PC-3 (cell line): ENCODE measurements at regions of chr2 and their contacts with region 1.

Region 1: GRCh38 chr2:70855667-70856066 is 20.1 kb upstream of the CD207 start:
- DNase-seq: no peak
- ATAC-seq: no peak
- H3K4me3 ChIP-seq: no peak overlapping the region
- H3K27ac ChIP-seq: no peak overlapping the region
- H3K4me1 ChIP-seq: no peaks in the 10 kb centered on the region
- H3K27me3 ChIP-seq: peaks cover 50% of the 10 kb centered on the region
- CTCF ChIP-seq: no peak

Region 2: GRCh38 chr2:70833246-70833645 is 22.4 kb before region 1 on chr2:
- CTCF ChIA-PET with region 1: no interaction called
- POLR2A ChIA-PET with region 1: no interaction called
- intact Hi-C with region 1: loop called (anchors 1 kb)
- DNase-seq: no peak
- ATAC-seq: no peak
- H3K4me3 ChIP-seq: no peak overlapping the region
- H3K27ac ChIP-seq: no peak overlapping the region
- H3K4me1 ChIP-seq: no peaks in the 10 kb centered on the region
- H3K27me3 ChIP-seq: peaks cover 88% of the 10 kb centered on the region
- CTCF ChIP-seq: no peak

Region 3: DNA sequence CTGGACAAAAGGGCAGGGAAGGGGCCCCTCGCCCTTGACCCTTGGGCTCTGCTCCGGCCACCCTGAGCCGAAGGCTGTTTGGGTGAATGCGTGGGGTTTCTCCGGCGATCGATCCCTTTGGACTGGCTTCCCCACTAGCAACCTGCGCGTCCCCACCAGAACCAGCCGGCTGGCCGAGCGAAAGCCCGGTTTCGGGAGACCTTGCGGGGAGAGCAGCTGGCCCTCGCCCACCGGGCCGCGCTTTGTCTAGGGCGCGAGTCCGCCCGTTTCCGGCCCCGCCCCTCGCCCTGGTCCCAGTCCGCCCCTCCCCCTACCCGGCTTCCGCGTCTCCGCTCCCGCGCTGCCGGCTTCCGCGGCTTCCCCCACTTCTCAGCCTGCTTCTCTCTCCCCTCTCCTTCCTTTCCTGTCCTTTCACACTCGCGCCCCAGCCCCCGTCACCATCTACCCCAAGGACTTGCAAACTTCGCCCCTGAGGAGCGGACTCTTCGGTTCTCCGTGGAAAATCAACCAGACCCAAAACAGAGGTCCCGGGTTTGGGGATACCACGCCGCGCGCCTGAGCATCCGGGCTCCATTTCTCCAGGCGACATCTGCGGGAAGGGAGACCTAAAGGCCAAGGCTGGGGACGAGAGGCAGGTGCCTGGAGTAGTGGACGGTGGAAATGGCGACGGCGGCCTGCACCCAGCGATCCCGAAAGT is 32.0 kb after region 1 on chr2:
- CTCF ChIA-PET with region 1: no interaction called
- POLR2A ChIA-PET with region 1: no interaction called
- intact Hi-C with region 1: no loop called
- DNase-seq: no peak
- ATAC-seq: no peak
- H3K4me3 ChIP-seq: no peak overlapping the region
- H3K27ac ChIP-seq: no peak overlapping the region
- H3K4me1 ChIP-seq: no peaks in the 10 kb centered on the region
- H3K27me3 ChIP-seq: peaks cover 44% of the 10 kb centered on the region
- CTCF ChIP-seq: no peak

Region 4: DNA sequence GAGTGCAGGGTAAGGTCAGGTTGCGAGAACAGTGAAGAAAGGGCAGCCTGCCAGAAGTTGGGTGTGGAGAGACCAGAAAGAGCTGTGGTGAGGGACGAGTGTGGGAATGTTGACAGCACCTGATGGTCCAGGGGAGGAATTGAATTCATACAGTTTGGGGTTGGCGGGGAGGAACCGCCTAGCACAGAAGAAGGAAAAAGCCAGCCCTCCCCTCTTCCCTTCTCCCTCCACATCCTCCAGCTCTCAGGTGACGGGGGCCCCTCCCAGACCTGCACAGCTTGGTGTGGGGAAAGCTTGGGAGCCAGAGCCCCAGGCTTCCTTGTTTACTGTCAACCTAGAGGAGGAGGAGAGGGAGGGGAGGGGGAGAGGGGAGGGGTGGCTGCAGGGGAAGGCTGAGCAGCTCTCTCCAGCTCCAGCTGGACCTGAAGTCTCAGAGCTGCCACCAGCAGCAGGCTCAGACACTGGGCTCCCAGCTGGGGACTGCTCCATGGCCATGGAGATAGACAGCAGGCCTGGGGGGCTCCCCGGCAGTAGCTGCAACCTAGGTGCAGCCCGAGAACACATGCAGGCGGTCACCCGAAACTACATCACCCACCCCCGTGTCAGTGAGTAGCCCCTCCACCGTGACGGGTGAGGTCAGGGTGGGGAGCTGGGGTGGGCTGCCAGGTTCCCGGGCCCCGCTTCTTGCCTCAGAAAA is 79.9 kb after region 1 on chr2 and contains the start of gene ATP6V1B1:
- CTCF ChIA-PET with region 1: no interaction called
- POLR2A ChIA-PET with region 1: no interaction called
- intact Hi-C with region 1: no loop called
- DNase-seq: no peak
- ATAC-seq: no peak
- H3K4me3 ChIP-seq: no peak within 1 kb of the TSS
- H3K27ac ChIP-seq: no peak within 1 kb of the TSS
- H3K4me1 ChIP-seq: no peaks in the 10 kb centered on the region
- H3K27me3 ChIP-seq: no peaks in the 10 kb centered on the region
- CTCF ChIP-seq: no peak
- total RNA-seq, gene ATP6V1B1: not detected in 2 replicates